Mammary epithelial cell (primary cell): ENCODE measurements at regions of chr2 and their contacts with region 1.

Region 1: DNA sequence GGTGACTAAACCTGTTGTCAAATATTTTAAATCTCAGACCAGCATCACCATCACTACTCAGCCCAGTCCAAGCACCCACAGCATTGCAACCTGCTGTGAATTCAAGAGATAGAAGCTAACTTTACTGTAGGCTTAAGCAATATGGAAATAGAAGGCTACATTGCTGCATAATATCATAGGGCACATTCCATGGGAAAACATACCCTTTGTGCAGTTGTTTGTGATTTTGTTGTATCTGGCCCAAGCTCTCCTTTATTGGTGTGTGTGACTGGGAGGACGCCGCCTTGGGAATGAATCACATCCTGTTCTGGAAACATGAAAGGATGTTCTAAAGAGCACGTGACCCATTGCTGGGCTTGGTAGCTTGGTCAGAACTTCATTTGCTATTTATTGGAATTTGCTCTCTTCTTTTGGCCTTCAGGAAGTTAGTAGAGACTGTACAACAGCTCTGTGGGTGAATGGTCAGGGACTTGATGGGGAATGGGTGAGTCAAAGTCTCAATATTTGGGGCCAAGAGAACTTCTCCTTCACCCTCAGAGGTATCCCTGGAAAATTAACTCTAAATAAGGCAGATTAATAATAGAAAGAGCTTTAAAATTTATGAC is 106.8 kb upstream of the SERPINE2 start:
- DNase-seq: peak; percentile 84
- H3K4me3 ChIP-seq: no peak overlapping the region
- H3K27ac ChIP-seq: peak overlapping the region; percentile 64
- H3K4me1 ChIP-seq: peaks cover 46% of the 10 kb centered on the region
- H3K27me3 ChIP-seq: no peaks in the 10 kb centered on the region
- CTCF ChIP-seq: no peak

Region 2: GRCh38 chr2:223993621-223994232 is 152.1 kb before region 1 on chr2:
- CTCF ChIA-PET with region 1: no interaction called
- dilution Hi-C with region 1: no loop called
- in situ Hi-C with region 1: no loop called
- intact Hi-C with region 1: loop called (anchors 2 kb)
- DNase-seq: peak; percentile 48
- H3K4me3 ChIP-seq: no peak overlapping the region
- H3K27ac ChIP-seq: no peak overlapping the region
- H3K4me1 ChIP-seq: peaks cover 12% of the 10 kb centered on the region
- H3K27me3 ChIP-seq: no peaks in the 10 kb centered on the region
- CTCF ChIP-seq: peak; percentile 81 to 83

Region 3: DNA sequence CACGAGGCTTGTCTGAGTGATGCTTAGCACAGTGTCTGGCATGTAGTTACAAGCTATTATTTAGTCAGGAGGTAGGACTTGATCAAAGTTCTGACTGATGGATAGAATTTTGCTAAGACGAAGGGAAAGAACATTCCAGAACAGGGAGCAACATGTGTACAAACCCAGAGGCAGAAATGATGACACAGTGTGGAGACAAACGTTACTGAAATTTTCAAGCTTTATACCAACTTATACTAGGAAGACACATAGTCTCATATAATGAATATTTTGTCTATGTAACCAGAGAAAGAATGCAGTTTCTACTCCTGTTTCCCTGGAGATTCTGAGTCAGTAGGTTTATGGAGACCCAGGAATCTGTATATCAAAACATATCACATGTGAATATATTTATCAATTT is 132.7 kb after region 1 on chr2:
- CTCF ChIA-PET with region 1: no interaction called
- dilution Hi-C with region 1: no loop called
- in situ Hi-C with region 1: no loop called
- intact Hi-C with region 1: loop called (anchors 1 kb)
- DNase-seq: peak; percentile 78
- H3K4me3 ChIP-seq: no peak overlapping the region
- H3K27ac ChIP-seq: no peak overlapping the region
- H3K4me1 ChIP-seq: no peaks in the 10 kb centered on the region
- H3K27me3 ChIP-seq: no peaks in the 10 kb centered on the region
- CTCF ChIP-seq: peak in 1 of 2 donors; percentile 33